Esophagus muscularis mucosa (tissue), 4 donors: ENCODE measurements at regions of chr20 and their contacts with region 1.

Region 1: GRCh38 chr20:19995220-19995863 is 21.8 kb upstream of the NAA20 start:
- DNase-seq: no peak
- H3K4me3 ChIP-seq: no peak overlapping the region
- H3K27ac ChIP-seq: peak overlapping the region; percentile 14 to 81 (median 74)
- H3K4me1 ChIP-seq: peaks cover 63 to 78% (median 69%) of the 10 kb centered on the region in 4 donors
- H3K27me3 ChIP-seq: no peaks in the 10 kb centered on the region
- CTCF ChIP-seq: peak; percentile 82 to 85 (median 85)
- EP300 ChIP-seq: no peak
- POLR2A ChIP-seq: no peak

Region 2: DNA sequence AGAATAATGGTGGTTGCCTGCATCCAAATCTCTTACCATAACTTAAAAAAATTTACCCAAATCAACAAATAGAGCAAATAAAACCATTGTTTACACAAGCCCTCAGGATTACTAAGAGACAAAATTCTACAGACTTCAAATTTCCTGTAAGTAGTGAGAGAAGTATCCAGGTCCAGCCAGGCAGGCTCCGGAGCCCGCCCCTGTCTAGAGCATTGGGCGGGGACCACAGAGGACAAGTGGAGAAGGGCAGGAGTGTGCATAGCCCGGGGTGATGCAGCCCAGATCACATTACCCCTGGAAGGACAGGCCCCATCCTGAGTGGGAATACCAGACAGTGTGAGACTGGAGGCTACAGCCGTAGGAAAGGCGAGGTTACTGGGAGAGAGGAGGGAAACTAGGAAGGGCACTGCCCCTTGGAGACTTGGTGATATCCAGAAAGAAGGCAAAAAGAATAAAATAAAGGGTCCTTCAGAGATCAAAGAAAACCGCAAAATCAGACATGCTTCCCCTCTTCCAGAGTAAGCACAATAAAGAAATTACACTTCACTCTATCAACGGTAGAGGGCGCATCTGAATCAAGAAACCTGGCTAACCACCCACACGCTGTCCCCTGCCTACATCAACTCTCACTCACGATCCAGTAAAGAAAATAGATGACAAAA is 210.7 kb before region 1 on chr20:
- intact Hi-C with region 1: loop called (anchors 1 kb)
- DNase-seq: no peak
- H3K4me3 ChIP-seq: peak overlapping the region in 1 of 4 donors; percentile 3
- H3K27ac ChIP-seq: peak overlapping the region; percentile 1 to 57 (median 48)
- H3K4me1 ChIP-seq: peaks cover 30 to 34% (median 33%) of the 10 kb centered on the region in 4 donors
- H3K27me3 ChIP-seq: no peaks in the 10 kb centered on the region
- CTCF ChIP-seq: peak; percentile 79 to 86 (median 85)
- EP300 ChIP-seq: no peak
- POLR2A ChIP-seq: no peak